CD8-positive, alpha-beta T cell (primary cell): ENCODE measurements at regions of chr1 and their contacts with region 1.

Region 1: DNA sequence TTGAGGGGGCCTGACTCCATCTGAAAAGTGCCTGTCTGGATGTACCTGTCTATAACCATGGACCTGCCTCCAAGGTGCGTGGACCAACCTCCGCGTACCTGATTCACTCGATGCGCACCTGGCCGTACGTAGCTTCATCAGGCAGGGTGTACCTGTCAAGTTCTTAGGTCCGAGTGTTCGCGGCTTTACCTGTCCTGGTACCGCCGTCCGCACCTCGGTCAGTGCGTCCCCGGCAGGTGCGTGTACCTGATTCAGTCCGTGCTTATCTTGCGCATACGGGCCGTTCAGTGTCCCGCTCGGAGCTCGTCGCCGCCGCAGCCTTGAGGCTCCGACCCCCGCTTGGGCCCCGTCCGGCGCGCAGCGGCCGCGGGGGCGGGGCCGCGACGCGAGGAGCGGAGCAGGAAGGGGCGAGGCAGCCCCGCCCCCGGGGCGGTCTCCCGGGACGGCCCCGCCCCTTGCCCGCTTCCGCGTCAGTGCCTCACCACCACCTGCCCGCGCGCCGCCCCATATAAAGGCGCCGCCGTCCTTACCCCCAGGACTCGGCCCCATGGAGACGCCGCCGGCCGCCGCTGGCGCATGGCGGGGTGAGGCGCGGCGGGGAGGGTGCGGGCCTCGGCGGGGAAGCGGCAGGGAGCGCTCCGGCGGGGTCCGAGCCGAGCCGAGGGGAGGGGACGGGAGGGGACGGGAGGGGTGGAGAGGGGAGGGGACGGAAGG is at the start of gene ZC3H12A:
- DNase-seq: peak; percentile 86 to 97 (median 92)
- ATAC-seq: peak; percentile 57
- H3K4me3 ChIP-seq: peak within 1 kb of the TSS; percentile 93 to 95
- H3K4me3 Mint-ChIP-seq: peak within 1 kb of the TSS; percentile 95
- H3K27ac ChIP-seq: peak within 1 kb of the TSS; percentile 95 to 99
- H3K27ac Mint-ChIP-seq: peak within 1 kb of the TSS; percentile 99
- H3K4me1 ChIP-seq: peaks cover 43% of the 10 kb centered on the region
- H3K4me1 Mint-ChIP-seq: peaks cover 59% of the 10 kb centered on the region
- H3K27me3 ChIP-seq: no peaks in the 10 kb centered on the region
- H3K27me3 Mint-ChIP-seq: no peaks in the 10 kb centered on the region
- CTCF ChIP-seq: no peak
- total RNA-seq, gene ZC3H12A: 202 to 205 TPM

Region 2: DNA sequence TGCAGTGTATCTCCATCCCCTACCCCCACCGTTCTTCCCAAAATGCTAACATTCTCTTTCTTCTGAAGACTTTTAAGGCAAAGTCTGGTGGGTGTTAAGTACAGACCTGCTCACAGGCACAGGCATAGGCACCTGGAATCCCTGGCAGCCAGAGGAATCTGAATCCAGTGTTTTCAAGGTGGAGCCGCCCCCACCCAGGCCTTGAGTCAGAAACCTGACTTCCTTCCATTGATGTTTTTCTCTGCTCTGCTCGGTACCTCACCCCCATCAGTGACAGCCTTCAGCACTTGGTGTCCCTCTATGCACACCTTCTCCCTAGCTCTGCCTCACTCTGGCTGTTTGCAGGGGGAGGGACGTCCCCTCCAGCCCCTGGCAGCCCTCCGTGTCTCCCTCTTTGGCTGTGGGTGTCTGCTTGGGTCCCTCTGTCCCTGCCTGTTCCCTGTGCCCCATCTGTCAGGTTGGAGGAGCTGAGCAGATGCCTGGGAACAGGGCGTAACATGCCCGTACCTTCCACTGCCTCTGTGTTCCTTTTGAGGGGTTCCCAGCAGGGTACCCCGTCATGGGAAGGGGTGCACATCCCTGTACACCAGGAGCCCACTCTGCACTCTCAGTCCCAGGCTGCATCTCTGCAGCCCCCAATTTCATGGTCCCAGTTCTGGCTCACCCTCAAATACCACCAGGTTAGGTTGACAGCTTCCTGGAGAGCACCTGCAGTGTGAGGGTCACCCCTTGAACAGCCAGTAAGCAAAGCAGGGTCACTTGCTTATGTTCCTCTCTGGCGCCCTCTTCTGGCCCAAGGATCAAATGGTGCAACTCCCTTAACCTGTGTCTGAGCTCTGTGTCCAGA is 1909.9 kb before region 1 on chr1:
- CTCF ChIA-PET with region 1: no interaction called
- POLR2A ChIA-PET with region 1: no interaction called
- intact Hi-C with region 1: no loop called
- DNase-seq: peak; percentile 61 to 87 (median 83)
- ATAC-seq: peak; percentile 74
- H3K4me3 ChIP-seq: no peak overlapping the region
- H3K4me3 Mint-ChIP-seq: no peak overlapping the region
- H3K27ac ChIP-seq: no peak overlapping the region
- H3K27ac Mint-ChIP-seq: no peak overlapping the region
- H3K4me1 ChIP-seq: no peaks in the 10 kb centered on the region
- H3K4me1 Mint-ChIP-seq: peaks cover 32% of the 10 kb centered on the region
- H3K27me3 ChIP-seq: no peaks in the 10 kb centered on the region
- H3K27me3 Mint-ChIP-seq: no peaks in the 10 kb centered on the region
- CTCF ChIP-seq: peak; percentile 72

Region 3: GRCh38 chr1:37514350-37515184 is 40.4 kb after region 1 on chr1 and contains the start of gene MEAF6:
- CTCF ChIA-PET with region 1: interaction called, 6 read pairs
- POLR2A ChIA-PET with region 1: interaction called, 27 read pairs
- intact Hi-C with region 1: loop called (anchors 1 kb)
- DNase-seq: peak; percentile 68 to 92 (median 83)
- ATAC-seq: peak; percentile 94
- H3K4me3 ChIP-seq: peak within 1 kb of the TSS; percentile 59 to 67
- H3K4me3 Mint-ChIP-seq: peak within 1 kb of the TSS; percentile 97
- H3K27ac ChIP-seq: peak within 1 kb of the TSS; percentile 78 to 79
- H3K27ac Mint-ChIP-seq: peak within 1 kb of the TSS; percentile 97
- H3K4me1 ChIP-seq: peaks cover 30% of the 10 kb centered on the region
- H3K4me1 Mint-ChIP-seq: peaks cover 44% of the 10 kb centered on the region
- H3K27me3 ChIP-seq: no peaks in the 10 kb centered on the region
- H3K27me3 Mint-ChIP-seq: no peaks in the 10 kb centered on the region
- CTCF ChIP-seq: peak; percentile 72
- total RNA-seq, gene MEAF6: 43.4 to 46.0 TPM

Region 4: DNA sequence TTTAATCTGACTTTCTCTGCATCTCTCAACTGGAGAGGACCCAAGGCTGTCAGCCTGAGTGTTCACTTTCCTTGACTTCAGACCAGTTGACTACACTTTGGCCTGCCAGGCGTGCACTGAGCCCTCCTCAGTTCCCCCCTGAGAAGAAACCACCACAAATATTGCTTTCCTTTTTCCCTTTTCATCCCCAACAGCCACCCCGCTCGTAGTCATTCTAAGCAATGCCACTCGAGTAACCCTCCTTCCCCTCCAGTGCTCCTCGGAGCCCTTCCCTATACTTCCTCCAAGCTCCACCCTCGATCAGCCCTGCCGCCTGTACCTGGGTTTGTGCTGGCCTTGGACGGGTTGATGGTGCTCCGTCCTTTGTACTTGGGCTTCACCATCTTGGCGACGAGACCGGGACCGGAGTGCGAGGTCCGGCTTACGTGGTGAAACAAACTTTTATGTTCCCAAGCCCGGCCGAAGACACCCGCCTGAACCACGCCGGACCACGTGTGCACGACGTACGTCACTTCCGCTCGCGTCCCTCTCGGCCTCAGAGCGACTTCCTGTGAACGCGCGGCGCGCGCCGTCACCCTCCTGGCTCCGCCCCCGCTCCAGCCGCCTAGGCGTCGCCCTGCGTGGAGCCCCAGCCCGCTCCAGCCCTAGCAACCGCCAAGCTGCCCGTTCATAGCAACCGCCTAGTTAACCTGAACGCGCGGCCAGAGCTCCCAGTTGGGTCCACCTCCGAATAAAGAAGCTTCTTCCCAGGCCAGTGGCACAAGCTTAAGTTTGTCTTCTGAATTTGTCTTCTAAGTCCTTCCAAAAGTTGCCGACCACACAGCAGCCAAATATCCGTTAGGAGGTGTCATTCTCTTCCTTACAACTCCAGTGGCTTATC is 121.5 kb after region 1 on chr1 and contains the start of gene GNL2:
- CTCF ChIA-PET with region 1: interaction called, 3 read pairs
- POLR2A ChIA-PET with region 1: no interaction called
- intact Hi-C with region 1: loop called (anchors 2 to 5 kb)
- DNase-seq: peak; percentile 92 to 99 (median 96)
- ATAC-seq: peak; percentile 95
- H3K4me3 ChIP-seq: peak within 1 kb of the TSS; percentile 67 to 88
- H3K4me3 Mint-ChIP-seq: peak within 1 kb of the TSS; percentile 100
- H3K27ac ChIP-seq: peak within 1 kb of the TSS; percentile 68 to 93
- H3K27ac Mint-ChIP-seq: peak within 1 kb of the TSS; percentile 99
- H3K4me1 ChIP-seq: peaks cover 23% of the 10 kb centered on the region
- H3K4me1 Mint-ChIP-seq: peaks cover 36% of the 10 kb centered on the region
- H3K27me3 ChIP-seq: no peaks in the 10 kb centered on the region
- H3K27me3 Mint-ChIP-seq: no peaks in the 10 kb centered on the region
- CTCF ChIP-seq: no peak
- total RNA-seq, gene GNL2: 54.6 to 55.2 TPM

Region 5: DNA sequence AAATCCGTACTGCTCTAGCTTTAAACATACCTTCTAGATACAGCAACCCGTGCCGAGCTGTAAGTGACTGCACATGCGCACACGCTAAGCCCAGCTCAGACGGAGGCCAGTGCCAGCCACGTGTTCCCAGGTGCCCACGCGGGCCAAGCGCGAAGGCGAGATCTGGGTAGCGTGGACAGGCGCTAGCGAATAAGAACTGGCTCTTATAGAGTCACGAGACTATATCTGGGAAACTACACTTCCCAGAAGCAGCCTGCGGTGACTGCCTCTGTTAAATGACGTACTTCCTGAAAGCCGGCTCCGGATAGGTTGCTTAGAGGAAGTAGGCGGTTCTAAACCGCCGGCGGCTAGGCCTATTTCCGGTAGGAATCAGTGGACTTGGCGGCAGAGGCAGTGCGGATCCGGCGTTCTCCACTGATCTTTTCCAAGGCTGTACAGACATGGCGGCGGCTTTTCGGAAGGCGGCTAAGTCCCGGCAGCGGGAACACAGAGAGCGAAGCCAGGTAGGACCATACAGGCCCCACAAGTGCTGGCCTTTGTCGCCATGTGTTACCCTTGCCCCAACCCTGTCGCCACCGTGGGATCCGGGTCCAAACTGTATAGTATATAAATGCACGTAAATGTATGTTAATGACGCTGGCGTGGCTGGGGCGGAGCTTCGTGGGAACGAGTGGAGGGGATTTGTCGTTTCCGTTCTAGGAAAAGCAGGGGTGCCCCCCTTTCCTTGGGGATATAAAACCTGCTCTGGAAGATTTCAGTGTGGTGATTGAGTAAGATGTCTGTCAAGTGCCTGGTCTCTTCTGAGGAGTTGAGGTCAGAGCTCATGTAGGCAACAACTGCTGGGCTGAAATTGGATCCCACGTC is 538.4 kb after region 1 on chr1 and contains the start of gene UTP11:
- CTCF ChIA-PET with region 1: no interaction called
- POLR2A ChIA-PET with region 1: interaction called, 3 read pairs
- intact Hi-C with region 1: loop called in 1 of 2 experiments (anchors 10 kb)
- DNase-seq: peak; percentile 80 to 97 (median 88)
- ATAC-seq: peak; percentile 86
- H3K4me3 ChIP-seq: peak within 1 kb of the TSS; percentile 66 to 94
- H3K4me3 Mint-ChIP-seq: peak within 1 kb of the TSS; percentile 99
- H3K27ac ChIP-seq: peak within 1 kb of the TSS; percentile 74 to 94
- H3K27ac Mint-ChIP-seq: peak within 1 kb of the TSS; percentile 99
- H3K4me1 ChIP-seq: peaks cover 40% of the 10 kb centered on the region
- H3K4me1 Mint-ChIP-seq: peaks cover 57% of the 10 kb centered on the region
- H3K27me3 ChIP-seq: no peaks in the 10 kb centered on the region
- H3K27me3 Mint-ChIP-seq: no peaks in the 10 kb centered on the region
- CTCF ChIP-seq: no peak
- total RNA-seq, gene UTP11: 12.8 to 14.0 TPM

Region 6: DNA sequence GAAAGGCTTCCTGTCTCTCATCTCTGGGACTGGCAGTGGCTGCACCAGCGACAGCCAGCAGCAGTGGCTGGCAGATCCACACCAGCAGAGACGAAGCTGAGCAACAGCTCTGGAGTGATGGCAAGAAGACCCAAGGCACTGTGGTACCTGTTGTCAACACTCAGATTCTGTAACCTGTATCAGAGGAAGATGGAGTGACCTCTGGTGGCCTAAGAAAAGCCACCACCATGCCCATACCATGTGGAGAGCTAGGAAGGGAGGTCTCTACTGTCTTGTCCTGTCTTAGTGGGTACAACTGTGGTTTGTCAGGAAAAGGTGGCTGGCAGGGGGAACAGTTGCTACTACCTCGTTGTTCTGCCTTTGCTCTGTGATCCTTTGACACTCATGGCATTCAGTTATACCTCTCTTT is 1489.9 kb after region 1 on chr1:
- CTCF ChIA-PET with region 1: no interaction called
- POLR2A ChIA-PET with region 1: no interaction called
- intact Hi-C with region 1: no loop called
- DNase-seq: peak in 4 of 9 experiments; percentile 11 to 48 (median 26)
- ATAC-seq: peak; percentile 52
- H3K4me3 ChIP-seq: no peak overlapping the region
- H3K4me3 Mint-ChIP-seq: no peak overlapping the region
- H3K27ac ChIP-seq: no peak overlapping the region
- H3K27ac Mint-ChIP-seq: no peak overlapping the region
- H3K4me1 ChIP-seq: peaks cover 7% of the 10 kb centered on the region
- H3K4me1 Mint-ChIP-seq: peaks cover 9% of the 10 kb centered on the region
- H3K27me3 ChIP-seq: no peaks in the 10 kb centered on the region
- H3K27me3 Mint-ChIP-seq: no peaks in the 10 kb centered on the region
- CTCF ChIP-seq: no peak